ENCODE measurements at regions of chr22 and their contacts with region 1.

Region 1: DNA sequence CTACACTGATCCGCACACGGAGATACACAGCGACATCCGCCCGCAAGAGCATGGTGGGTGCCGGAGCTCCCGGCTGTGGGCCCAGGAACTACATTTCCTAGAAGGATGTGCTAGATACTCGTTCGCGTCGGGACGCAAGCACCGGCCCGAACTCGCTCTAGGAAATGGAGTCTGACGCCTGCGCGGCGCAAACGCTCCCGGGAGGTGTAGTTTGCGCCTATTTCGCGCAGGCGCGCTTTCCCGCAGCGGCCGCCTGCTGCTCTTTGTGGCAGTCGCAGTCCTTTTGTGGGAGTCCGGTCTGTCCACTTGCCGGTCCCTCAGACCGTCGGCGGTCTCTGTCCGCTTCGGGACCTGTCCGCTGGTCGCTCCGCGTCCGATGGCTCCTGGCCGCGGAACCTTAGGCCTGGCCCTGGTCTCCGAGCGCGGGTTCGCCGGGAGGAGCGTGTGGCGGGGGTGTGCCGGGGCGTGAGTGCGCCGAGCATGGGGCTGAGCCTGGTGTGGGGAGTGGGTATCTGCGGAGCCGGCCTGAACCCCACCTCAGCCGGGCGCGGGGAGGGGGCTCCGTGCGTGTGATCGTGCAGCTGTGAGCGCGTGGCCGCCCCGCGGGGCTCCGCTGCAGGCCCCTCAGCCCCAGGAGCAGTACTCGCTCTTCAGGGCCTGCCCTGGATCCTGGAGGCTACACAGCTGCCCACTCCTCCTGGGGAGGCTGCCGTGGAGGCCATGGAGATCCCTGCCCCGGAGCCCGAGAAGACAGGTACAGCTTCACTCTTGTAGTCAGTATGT is at the start of gene ZNF74:
- DNase-seq: peak; percentile 70 to 94 (median 84)
- ATAC-seq: peak; percentile 97 to 98 (median 98)
- H3K4me3 ChIP-seq: peak within 1 kb of the TSS; percentile 68 to 85
- H3K4me3 Mint-ChIP-seq: peak within 1 kb of the TSS; percentile 82 to 90 (median 89)
- H3K27ac ChIP-seq: peak within 1 kb of the TSS; percentile 63
- H3K27ac Mint-ChIP-seq: peak within 1 kb of the TSS; percentile 93 to 95
- H3K4me1 ChIP-seq: peaks cover 8 to 24% of the 10 kb centered on the region in 2 experiments
- H3K4me1 Mint-ChIP-seq: peaks cover 35 to 40% (median 39%) of the 10 kb centered on the region in 3 donors
- H3K27me3 ChIP-seq: no peaks in the 10 kb centered on the region
- H3K27me3 Mint-ChIP-seq: no peaks in the 10 kb centered on the region
- total RNA-seq, gene ZNF74: 6.8 to 19.7 (median 17.3) TPM

Region 2: GRCh38 chr22:20116951-20117645 is 277.0 kb before region 1 on chr22 and contains the start of gene TRMT2A:
- CTCF ChIA-PET with region 1: no interaction called
- POLR2A ChIA-PET with region 1: interaction called in 1 of 2 experiments, 10 read pairs
- DNase-seq: peak; percentile 90 to 99 (median 94)
- ATAC-seq: peak; percentile 82 to 87 (median 84)
- H3K4me3 ChIP-seq: peak within 1 kb of the TSS; percentile 79 to 86
- H3K4me3 Mint-ChIP-seq: peak within 1 kb of the TSS; percentile 77 to 89 (median 85)
- H3K27ac ChIP-seq: peak within 1 kb of the TSS; percentile 73
- H3K27ac Mint-ChIP-seq: peak within 1 kb of the TSS; percentile 89 to 92
- H3K4me1 ChIP-seq: peaks cover 17 to 86% of the 10 kb centered on the region in 2 experiments
- H3K4me1 Mint-ChIP-seq: peaks cover 24 to 52% (median 40%) of the 10 kb centered on the region in 3 donors
- H3K27me3 ChIP-seq: no peaks in the 10 kb centered on the region
- H3K27me3 Mint-ChIP-seq: no peaks in the 10 kb centered on the region
- total RNA-seq, gene TRMT2A: 87.6 to 136 (median 123) TPM

Region 3: GRCh38 chr22:20591660-20592310 is 197.7 kb after region 1 on chr22:
- CTCF ChIA-PET with region 1: no interaction called
- POLR2A ChIA-PET with region 1: no interaction called
- DNase-seq: no peak
- ATAC-seq: no peak
- H3K4me3 ChIP-seq: no peak overlapping the region
- H3K4me3 Mint-ChIP-seq: no peak overlapping the region
- H3K27ac ChIP-seq: no peak overlapping the region
- H3K27ac Mint-ChIP-seq: no peak overlapping the region
- H3K4me1 ChIP-seq: peaks cover 0 to 14% of the 10 kb centered on the region in 2 experiments
- H3K4me1 Mint-ChIP-seq: peaks cover 4 to 8% (median 7%) of the 10 kb centered on the region in 3 donors
- H3K27me3 ChIP-seq: no peaks in the 10 kb centered on the region
- H3K27me3 Mint-ChIP-seq: no peaks in the 10 kb centered on the region

Measured in T-cell (primary cell).